Activated CD8-positive, alpha-beta memory T cell treated with anti-CD3 and anti-CD28 coated beads, Interleukin-2, amount 10 ng/mL, durations not matched to agents 7 days and 5 days (primary cell): ENCODE measurements at regions of chr14 and their contacts with region 1.

Region 1: GRCh38 chr14:81464247-81465002 is 64.3 kb upstream of the STON2 start:
- DNase-seq: peak; percentile 71
- ATAC-seq: peak; percentile 84
- H3K4me3 Mint-ChIP-seq: peak overlapping the region; percentile 78
- H3K27ac Mint-ChIP-seq: peak overlapping the region; percentile 90
- H3K4me1 Mint-ChIP-seq: peaks cover 9% of the 10 kb centered on the region
- H3K27me3 Mint-ChIP-seq: no peaks in the 10 kb centered on the region

Region 2: DNA sequence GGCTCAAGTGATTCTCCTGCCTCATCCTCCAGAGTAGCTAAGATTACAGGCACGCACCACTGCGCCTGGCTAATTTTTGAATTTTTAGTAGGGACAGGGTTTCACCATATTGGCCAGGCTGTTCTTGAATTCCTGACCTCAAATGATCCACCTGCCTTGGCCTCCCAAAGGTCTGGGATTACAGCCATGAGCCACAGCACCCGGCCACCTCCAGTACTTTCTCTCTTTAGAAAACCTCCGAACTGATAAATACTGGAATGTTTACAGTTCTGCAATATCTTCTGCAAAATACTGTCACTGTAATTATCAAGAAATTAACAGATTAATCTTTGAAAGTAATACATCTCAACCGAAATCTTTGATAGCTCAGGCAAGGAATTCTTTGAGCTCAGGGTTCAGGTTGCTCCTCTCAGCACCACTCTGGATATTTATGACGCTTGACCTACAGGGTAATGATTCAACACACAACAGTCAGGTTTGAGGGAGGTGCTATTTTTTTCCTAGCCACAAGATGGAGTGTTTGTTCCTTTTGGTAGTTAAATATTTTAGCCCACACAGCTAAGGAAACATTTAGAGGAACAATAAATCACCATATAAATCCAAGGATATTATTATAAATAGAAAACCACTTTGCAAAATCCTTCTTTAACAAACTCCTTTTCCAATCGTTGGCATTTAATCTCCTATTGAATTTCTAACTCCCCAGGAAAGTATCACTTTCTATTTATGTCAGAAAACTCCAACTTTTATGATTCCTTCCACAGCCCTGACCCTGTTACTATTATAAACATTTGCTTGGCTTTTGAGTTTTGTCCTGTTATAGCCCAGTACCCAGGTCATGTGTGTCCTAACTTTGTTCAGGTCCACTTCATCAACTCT is 195.1 kb before region 1 on chr14:
- CTCF ChIA-PET with region 1: interaction called, 40 read pairs
- DNase-seq: no peak
- ATAC-seq: peak; percentile 66
- H3K4me3 Mint-ChIP-seq: no peak overlapping the region
- H3K27ac Mint-ChIP-seq: no peak overlapping the region
- H3K4me1 Mint-ChIP-seq: peaks cover 13% of the 10 kb centered on the region
- H3K27me3 Mint-ChIP-seq: peaks cover 42% of the 10 kb centered on the region

Region 3: GRCh38 chr14:81453166-81453766 is 11.2 kb before region 1 on chr14:
- CTCF ChIA-PET with region 1: interaction called, 15 read pairs
- DNase-seq: peak; percentile 69
- ATAC-seq: peak; percentile 63
- H3K4me3 Mint-ChIP-seq: no peak overlapping the region
- H3K27ac Mint-ChIP-seq: no peak overlapping the region
- H3K4me1 Mint-ChIP-seq: peaks cover 6% of the 10 kb centered on the region
- H3K27me3 Mint-ChIP-seq: peaks cover 22% of the 10 kb centered on the region

Region 4: GRCh38 chr14:81550001-81550637 is 85.7 kb after region 1 on chr14:
- CTCF ChIA-PET with region 1: no interaction called
- DNase-seq: no peak
- ATAC-seq: peak; percentile 86
- H3K4me3 Mint-ChIP-seq: peak overlapping the region; percentile 12
- H3K27ac Mint-ChIP-seq: peak overlapping the region; percentile 65
- H3K4me1 Mint-ChIP-seq: peaks cover 30% of the 10 kb centered on the region
- H3K27me3 Mint-ChIP-seq: peaks cover 1% of the 10 kb centered on the region